Activated naive CD4-positive, alpha-beta T cell treated with anti-CD3 and anti-CD28 coated beads for 36 hours (primary cell): ENCODE measurements at regions of chr12 and their contacts with region 1.

Region 1: DNA sequence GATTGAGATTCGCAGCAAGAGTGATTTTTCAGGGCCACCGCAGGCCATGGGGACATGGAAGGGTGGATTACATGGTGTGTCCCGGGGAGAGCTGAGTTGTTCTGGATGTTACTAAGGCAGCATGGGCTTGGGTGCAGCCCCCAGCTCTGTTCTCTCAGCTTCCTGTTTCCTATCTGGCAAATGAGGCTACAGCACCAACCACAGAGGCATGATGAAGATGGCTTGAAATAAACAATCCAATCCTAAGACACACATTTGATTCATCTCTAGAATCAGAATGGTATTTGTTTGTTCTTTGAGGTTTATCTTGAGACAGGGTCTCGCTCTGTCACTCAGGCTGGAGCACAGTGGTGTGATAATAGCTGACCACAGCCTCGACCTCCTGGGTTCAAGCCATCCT is 21.6 kb downstream of the GLTP start:
- DNase-seq: no peak
- H3K4me3 Mint-ChIP-seq: no peak overlapping the region
- H3K27ac Mint-ChIP-seq: peak overlapping the region; percentile 65
- H3K4me1 Mint-ChIP-seq: no peaks in the 10 kb centered on the region
- H3K27me3 Mint-ChIP-seq: no peaks in the 10 kb centered on the region

Region 2: GRCh38 chr12:109833307-109834189 is 25.2 kb before region 1 on chr12 and contains the start of gene TRPV4:
- CTCF ChIA-PET with region 1: no interaction called
- intact Hi-C with region 1: no loop called
- DNase-seq: no peak
- H3K4me3 Mint-ChIP-seq: no peak within 1 kb of the TSS
- H3K27ac Mint-ChIP-seq: no peak within 1 kb of the TSS
- H3K4me1 Mint-ChIP-seq: peaks cover 4% of the 10 kb centered on the region
- H3K27me3 Mint-ChIP-seq: peaks cover 13% of the 10 kb centered on the region
- total RNA-seq, gene TRPV4: not detected

Region 3: DNA sequence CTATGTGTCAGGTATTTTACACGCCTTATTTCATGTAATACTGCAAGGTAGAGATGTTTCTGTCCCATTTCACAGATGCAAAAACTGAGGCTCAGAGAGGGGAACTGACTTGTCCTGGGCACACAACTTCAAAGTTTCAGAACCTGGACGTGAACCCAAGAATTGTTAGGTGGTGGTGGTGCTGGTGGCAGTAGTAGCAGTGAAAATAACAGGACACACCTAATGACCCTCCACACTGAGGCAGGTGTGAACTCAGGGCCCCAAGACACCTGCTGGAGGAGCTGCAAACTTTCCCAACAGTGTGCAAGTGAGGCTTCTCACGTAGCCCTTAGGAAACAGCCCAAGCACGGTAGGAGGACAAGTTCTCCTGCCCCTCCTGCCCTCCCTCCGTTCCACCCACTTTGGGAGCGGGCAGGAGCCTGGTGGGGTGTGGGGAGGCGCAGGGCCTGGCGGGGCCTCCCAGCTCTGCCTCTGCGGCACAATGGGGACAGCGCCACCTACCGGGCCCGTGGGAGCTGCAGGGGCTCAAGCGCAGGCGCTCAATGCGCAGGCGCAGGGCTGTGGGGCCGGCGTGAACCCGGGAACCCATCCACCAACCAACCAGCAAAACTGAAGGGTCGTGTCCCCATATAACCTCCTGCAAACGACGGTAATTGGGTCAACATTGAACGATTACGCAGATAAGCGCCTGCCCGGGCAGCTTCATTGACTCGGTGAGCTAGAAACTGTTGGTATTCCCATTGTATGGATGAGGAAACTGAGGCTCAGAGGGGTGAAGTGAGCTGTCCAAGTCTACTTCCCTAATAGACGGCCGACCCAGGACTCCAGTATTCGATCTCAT is 13.6 kb before region 1 on chr12:
- CTCF ChIA-PET with region 1: interaction called, 21 read pairs
- intact Hi-C with region 1: no loop called
- DNase-seq: peak; percentile 92
- H3K4me3 Mint-ChIP-seq: peak overlapping the region; percentile 30
- H3K27ac Mint-ChIP-seq: no peak overlapping the region
- H3K4me1 Mint-ChIP-seq: peaks cover 2% of the 10 kb centered on the region
- H3K27me3 Mint-ChIP-seq: no peaks in the 10 kb centered on the region

Region 4: GRCh38 chr12:109880016-109880931 is 21.5 kb after region 1 on chr12 and contains the start of gene GLTP:
- CTCF ChIA-PET with region 1: interaction called, 16 read pairs
- intact Hi-C with region 1: loop called (anchors 1 kb)
- DNase-seq: peak; percentile 86
- H3K4me3 Mint-ChIP-seq: peak within 1 kb of the TSS; percentile 93
- H3K27ac Mint-ChIP-seq: peak within 1 kb of the TSS; percentile 66
- H3K4me1 Mint-ChIP-seq: peaks cover 42% of the 10 kb centered on the region
- H3K27me3 Mint-ChIP-seq: no peaks in the 10 kb centered on the region
- total RNA-seq, gene GLTP: 18.1 to 19.9 TPM

Region 5: DNA sequence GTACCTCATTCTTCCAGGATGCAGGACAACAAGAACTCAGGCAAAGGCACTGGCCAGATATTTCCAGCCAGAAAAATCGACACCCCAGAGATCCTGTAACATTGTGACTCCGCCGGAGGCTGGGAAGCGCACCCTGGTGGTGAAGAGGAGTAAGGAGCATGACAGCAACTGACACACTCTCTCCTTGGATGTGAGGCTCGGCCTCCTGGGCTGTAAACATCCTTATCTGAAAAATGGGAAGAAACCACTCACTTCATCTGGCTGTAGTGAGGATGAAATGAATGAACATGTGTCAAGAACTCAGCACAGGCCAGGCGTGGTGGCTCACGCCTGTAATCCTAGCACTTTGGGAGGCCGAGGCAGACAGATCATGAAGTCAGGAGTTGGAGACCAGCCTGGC is 68.9 kb after region 1 on chr12:
- CTCF ChIA-PET with region 1: interaction called, 16 read pairs
- intact Hi-C with region 1: loop called (anchors 1 kb)
- DNase-seq: peak; percentile 57
- H3K4me3 Mint-ChIP-seq: no peak overlapping the region
- H3K27ac Mint-ChIP-seq: no peak overlapping the region
- H3K4me1 Mint-ChIP-seq: no peaks in the 10 kb centered on the region
- H3K27me3 Mint-ChIP-seq: no peaks in the 10 kb centered on the region